SK-N-SH (cell line): ENCODE measurements at regions of chr3 and their contacts with region 1.

Region 1: DNA sequence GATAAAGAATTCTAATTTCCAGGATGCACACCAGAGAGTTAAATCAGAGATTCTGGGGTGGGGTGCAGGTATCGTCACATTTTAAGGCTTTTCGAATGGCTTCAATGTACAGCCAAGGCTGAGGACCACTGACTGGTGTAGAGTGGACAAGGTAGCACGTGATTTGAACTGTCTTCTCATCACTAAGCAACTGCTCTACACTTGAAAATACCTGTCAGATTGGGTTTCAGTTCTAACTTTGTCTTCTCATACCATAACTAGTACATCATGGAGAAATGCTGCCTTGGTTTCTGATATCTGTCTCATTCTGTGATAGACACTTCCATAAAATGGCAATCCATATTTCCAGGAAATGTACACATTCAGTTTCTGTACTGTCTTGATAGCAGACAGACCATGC is 58.0 kb upstream of the MRPL3 start:
- DNase-seq: no peak
- H3K4me3 ChIP-seq: no peak overlapping the region
- H3K27ac ChIP-seq: no peak overlapping the region
- H3K4me1 ChIP-seq: no peaks in the 10 kb centered on the region
- H3K27me3 ChIP-seq: no peaks in the 10 kb centered on the region; the same call in 1 of the 2 replicates
- CTCF ChIP-seq: no peak
- EP300 ChIP-seq: no peak
- RAD21 ChIP-seq: no peak

Region 2: GRCh38 chr3:131549340-131549739 is 11.5 kb before region 1 on chr3:
- CTCF ChIA-PET with region 1: interaction called, 12 read pairs
- POLR2A ChIA-PET with region 1: no interaction called
- DNase-seq: no peak
- H3K4me3 ChIP-seq: no peak overlapping the region
- H3K27ac ChIP-seq: no peak overlapping the region
- H3K4me1 ChIP-seq: peaks cover 0 to 8% of the 10 kb centered on the region in 2 experiments; a peak in 2 of 4 replicates
- H3K27me3 ChIP-seq: no peaks in the 10 kb centered on the region
- CTCF ChIP-seq: peak; percentile 57
- EP300 ChIP-seq: no peak
- RAD21 ChIP-seq: peak; percentile 55